WTC11 (cell line): ENCODE measurements at regions of chr4 and their contacts with region 1.

Region 1: DNA sequence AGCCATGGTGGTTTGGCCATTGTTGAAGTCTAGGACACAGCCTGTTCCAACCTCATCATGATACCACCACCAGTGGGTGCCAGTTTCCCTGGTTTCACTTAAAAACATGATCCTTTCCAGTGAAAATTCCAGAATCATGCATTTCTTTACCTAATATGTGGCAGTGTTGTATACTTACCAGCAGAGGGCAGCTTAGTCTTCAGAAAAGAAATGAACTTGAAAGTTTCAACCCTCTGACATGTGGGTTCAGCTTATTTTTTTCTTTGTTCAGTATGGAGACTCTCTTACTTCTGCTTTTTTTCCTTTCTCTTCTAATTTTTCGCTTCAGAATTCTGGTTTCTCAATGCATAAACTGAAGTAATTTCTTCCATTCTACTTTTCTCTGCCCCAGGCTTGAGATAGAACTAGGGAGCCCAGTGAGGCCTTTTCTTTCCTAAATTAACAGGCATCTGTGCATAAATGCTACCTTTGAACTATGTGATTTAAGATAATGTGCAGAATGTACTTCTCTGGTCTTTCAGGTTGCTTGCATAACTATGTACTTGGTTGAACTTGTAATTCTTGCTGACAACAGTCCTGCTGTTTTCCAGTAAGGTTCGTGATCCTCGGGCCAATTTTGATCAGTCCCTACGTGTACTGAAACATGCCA is 10.7 kb downstream of the LIAS start:
- DNase-seq: peak; percentile 36
- ATAC-seq: peak; percentile 97
- H3K4me3 Mint-ChIP-seq: no peak overlapping the region
- H3K27ac Mint-ChIP-seq: peak overlapping the region; percentile 97
- H3K4me1 Mint-ChIP-seq: peaks cover 4% of the 10 kb centered on the region; the same call in 1 of the 2 replicates
- H3K27me3 Mint-ChIP-seq: no peaks in the 10 kb centered on the region
- CTCF ChIP-seq: peak; percentile 73

Region 2: DNA sequence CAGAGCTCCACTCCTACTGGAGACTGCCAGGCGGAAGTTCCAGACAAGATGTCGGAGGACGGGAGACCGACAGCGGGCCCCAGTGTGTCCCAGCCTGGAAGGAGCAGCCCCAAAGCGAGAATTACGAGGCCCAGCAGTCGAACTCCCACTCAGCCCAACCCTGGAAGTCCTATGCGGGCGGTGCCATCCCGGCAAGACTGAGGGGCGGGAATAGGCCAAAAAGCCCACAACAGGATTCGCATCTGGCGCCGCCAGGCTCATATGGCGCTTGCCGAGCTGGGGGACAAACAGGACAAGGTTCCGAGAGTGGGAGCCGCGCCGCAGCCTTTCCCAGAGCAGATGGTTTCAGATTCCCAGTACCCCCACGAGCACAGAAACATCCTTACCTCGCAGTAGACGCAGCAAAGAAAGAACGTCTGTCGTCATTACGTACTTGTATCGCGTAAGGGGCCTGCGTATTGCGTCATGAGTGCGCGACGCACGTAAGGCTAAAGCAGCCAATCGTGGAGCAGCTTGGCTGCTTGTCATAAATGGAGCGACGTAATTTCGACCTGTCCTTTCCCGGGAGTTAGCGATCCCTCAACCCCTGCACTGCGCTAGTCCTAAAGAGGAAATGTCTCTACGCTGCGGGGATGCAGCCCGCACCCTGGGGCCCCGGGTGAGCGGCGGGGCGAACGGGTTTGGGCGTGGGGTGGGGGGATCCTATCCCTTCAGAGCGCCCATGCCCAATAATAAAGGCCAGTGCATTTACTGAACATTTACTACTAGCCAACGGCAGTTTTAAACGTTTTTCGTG is 10.8 kb before region 1 on chr4 and contains the starts of genes LIAS and RPL9:
- CTCF ChIA-PET with region 1: interaction called, 17 read pairs
- POLR2A ChIA-PET with region 1: interaction called, 3 read pairs
- DNase-seq: peak; percentile 94
- ATAC-seq: peak; percentile 94
- H3K4me3 Mint-ChIP-seq: peak within 1 kb of the TSS; percentile 99
- H3K27ac Mint-ChIP-seq: peak within 1 kb of the TSS; percentile 99
- H3K4me1 Mint-ChIP-seq: peaks cover 25% of the 10 kb centered on the region
- H3K27me3 Mint-ChIP-seq: no peaks in the 10 kb centered on the region; the same call in 1 of the 2 replicates
- CTCF ChIP-seq: no peak
- total RNA-seq, gene LIAS: 23.1 to 23.5 TPM (median 23.1 TPM) in 3 replicates
- total RNA-seq, gene RPL9: 1,191 to 1,343 TPM (median 1,328 TPM) in 3 replicates

Region 3: GRCh38 chr4:39527273-39528060 is 57.9 kb after region 1 on chr4 and contains the start of gene UGDH:
- CTCF ChIA-PET with region 1: interaction called, 11 read pairs
- POLR2A ChIA-PET with region 1: no interaction called
- DNase-seq: peak; percentile 96
- ATAC-seq: peak; percentile 97
- H3K4me3 Mint-ChIP-seq: peak within 1 kb of the TSS; percentile 99
- H3K27ac Mint-ChIP-seq: peak within 1 kb of the TSS; percentile 99
- H3K4me1 Mint-ChIP-seq: peaks cover 22% of the 10 kb centered on the region
- H3K27me3 Mint-ChIP-seq: peaks cover 9% of the 10 kb centered on the region
- CTCF ChIP-seq: no peak
- total RNA-seq, gene UGDH: 80.2 to 97.5 TPM (median 89.0 TPM) in 3 replicates

Region 4: GRCh38 chr4:39565878-39566600 is 96.5 kb after region 1 on chr4:
- CTCF ChIA-PET with region 1: no interaction called
- POLR2A ChIA-PET with region 1: no interaction called
- DNase-seq: no peak
- ATAC-seq: no peak
- H3K4me3 Mint-ChIP-seq: no peak overlapping the region
- H3K27ac Mint-ChIP-seq: no peak overlapping the region
- H3K4me1 Mint-ChIP-seq: peaks cover 7% of the 10 kb centered on the region
- H3K27me3 Mint-ChIP-seq: no peaks in the 10 kb centered on the region
- CTCF ChIP-seq: no peak